A549 (cell line): ENCODE measurements at regions of chr7 and their contacts with region 1.

Region 1: GRCh38 chr7:102236592-102237287 is 49.9 kb upstream of the SH2B2 start:
- DNase-seq: peak; percentile 78 to 87
- ATAC-seq: peak; percentile 94 to 97
- H3K4me3 ChIP-seq: no peak overlapping the region
- H3K27ac ChIP-seq: peak overlapping the region; percentile 65 to 78
- H3K4me1 ChIP-seq: peaks cover 6% of the 10 kb centered on the region
- CTCF ChIP-seq: peak; percentile 89
- EP300 ChIP-seq: no peak
- POLR2A ChIP-seq: no peak
- RAD21 ChIP-seq: peak; percentile 98

Region 2: GRCh38 chr7:102122026-102122425 is 114.7 kb before region 1 on chr7:
- CTCF ChIA-PET with region 1: interaction called, 10 read pairs
- POLR2A ChIA-PET with region 1: interaction called, 5 read pairs
- DNase-seq: peak; percentile 44 to 62
- ATAC-seq: no peak
- H3K4me3 ChIP-seq: no peak overlapping the region
- H3K27ac ChIP-seq: peak overlapping the region; percentile 88 to 93
- H3K4me1 ChIP-seq: peaks cover 56% of the 10 kb centered on the region
- CTCF ChIP-seq: no peak
- EP300 ChIP-seq: no peak; a peak in 1 of 5 replicates
- POLR2A ChIP-seq: no peak
- RAD21 ChIP-seq: no peak

Region 3: GRCh38 chr7:102220960-102221800 is 15.6 kb before region 1 on chr7:
- CTCF ChIA-PET with region 1: interaction called, 16 read pairs
- POLR2A ChIA-PET with region 1: no interaction called
- DNase-seq: no peak
- ATAC-seq: no peak
- H3K4me3 ChIP-seq: no peak overlapping the region
- H3K27ac ChIP-seq: no peak overlapping the region
- H3K4me1 ChIP-seq: no peaks in the 10 kb centered on the region
- CTCF ChIP-seq: no peak
- EP300 ChIP-seq: no peak
- POLR2A ChIP-seq: no peak
- RAD21 ChIP-seq: no peak

Region 4: GRCh38 chr7:102248456-102249395 is 12.0 kb after region 1 on chr7:
- CTCF ChIA-PET with region 1: interaction called, 30 read pairs
- POLR2A ChIA-PET with region 1: no interaction called
- DNase-seq: no peak
- ATAC-seq: 0 out of 6 replicates have a peak, but pooled peaks of 1 of the 2 experiments have one; percentile 27
- H3K4me3 ChIP-seq: no peak overlapping the region
- H3K27ac ChIP-seq: no peak overlapping the region
- H3K4me1 ChIP-seq: no peaks in the 10 kb centered on the region
- CTCF ChIP-seq: no peak
- EP300 ChIP-seq: no peak
- POLR2A ChIP-seq: no peak
- RAD21 ChIP-seq: no peak

Region 5: DNA sequence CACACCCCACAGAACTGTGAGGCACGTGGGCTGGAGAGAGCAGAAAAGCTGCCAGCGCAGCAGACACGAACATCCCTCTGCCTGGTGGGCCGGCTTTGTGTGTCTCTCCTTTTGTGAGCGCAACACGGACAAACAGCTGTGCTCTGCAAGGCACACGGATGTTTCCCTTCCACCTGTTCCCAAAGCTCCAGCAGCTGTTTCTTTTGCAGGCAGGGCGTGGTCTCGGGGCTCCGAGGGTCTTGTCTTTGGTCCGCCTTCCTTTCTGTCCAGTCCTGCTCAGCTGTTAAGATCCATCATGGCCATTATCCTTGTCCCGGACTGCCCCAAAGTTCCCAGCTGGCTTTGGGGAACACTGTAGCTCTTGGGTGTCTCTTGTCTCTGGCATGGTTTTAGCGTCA is 17.2 kb after region 1 on chr7:
- CTCF ChIA-PET with region 1: interaction called, 10 read pairs
- POLR2A ChIA-PET with region 1: no interaction called
- DNase-seq: no peak
- ATAC-seq: no peak
- H3K4me3 ChIP-seq: no peak overlapping the region
- H3K27ac ChIP-seq: no peak overlapping the region
- H3K4me1 ChIP-seq: no peaks in the 10 kb centered on the region
- CTCF ChIP-seq: no peak
- EP300 ChIP-seq: no peak
- POLR2A ChIP-seq: no peak
- RAD21 ChIP-seq: no peak

Region 6: DNA sequence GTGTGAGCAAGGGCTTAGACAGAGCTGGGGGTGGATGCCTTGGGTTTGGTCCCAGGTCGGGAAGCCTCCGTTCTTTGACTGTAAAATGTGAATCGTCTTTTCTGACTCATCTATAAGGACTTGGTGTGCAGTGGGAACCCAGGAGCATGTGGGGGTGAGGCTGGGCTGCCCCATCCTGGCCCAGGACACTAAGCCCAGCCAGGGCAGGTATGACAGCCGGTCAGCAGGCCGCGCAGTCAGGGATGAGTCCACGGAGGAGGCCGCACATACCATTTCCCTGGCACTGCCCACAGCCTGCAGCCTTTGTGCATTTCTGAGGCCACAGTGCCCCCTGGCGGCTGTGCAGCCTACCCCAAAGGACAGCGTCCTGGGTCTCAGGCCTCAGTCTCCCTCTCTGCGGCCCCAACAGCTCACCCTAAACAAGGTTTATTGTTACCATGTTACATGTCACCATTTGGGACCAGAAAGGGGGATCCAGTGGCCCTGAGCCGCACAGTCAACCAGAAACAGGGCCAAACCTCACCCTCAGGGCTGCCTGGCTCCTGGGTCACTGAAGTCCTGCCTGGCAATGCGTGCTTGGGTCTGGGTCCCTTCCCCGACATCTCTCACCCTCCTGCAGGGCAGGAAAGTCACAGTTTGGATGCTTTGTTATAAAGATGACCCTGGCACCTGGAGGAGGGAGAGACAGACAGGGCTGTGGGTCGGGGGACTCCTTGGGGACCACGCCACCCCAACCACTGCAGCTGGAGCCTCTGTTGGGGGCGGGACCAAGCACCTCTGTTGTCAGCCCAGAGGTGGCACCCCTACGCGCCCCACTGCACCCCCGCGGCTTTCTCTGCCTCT is 35.6 kb after region 1 on chr7:
- CTCF ChIA-PET with region 1: interaction called, 17 read pairs
- POLR2A ChIA-PET with region 1: no interaction called
- DNase-seq: peak; percentile 81 to 91
- ATAC-seq: peak; percentile 70 to 90
- H3K4me3 ChIP-seq: no peak overlapping the region
- H3K27ac ChIP-seq: peak overlapping the region; percentile 3 to 83; a peak in 4 of 6 replicates
- H3K4me1 ChIP-seq: peaks cover 29% of the 10 kb centered on the region
- CTCF ChIP-seq: peak; percentile 95
- EP300 ChIP-seq: no peak
- POLR2A ChIP-seq: no peak
- RAD21 ChIP-seq: peak; percentile 98